ENCODE measurements at regions of chr10 and their contacts with region 1.

Region 1: DNA sequence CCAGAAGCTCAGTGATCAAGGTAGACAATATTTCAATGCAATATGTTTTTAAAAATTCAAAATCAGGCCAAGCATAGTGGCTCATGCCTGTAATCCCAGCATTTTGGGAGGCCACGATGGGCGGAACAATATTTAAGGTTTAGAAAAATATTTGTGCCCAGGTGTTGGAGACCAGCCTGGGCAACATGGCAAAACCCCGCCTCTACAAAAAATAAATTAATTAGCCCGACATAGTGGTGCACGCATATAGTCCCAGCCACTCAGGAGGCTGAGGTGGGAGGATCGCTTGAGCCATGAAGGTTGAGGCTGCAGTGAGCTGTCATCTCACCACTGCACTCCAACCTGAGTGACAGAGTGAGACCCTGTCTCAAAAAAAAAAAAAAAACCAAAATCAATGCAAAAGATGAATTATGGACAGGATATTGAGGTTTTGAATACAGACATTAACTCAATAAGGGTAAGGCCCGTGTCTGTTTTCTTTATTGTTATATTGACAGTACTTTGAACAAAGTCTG is 913 bp upstream of the IFIT5 start:
- DNase-seq: no peak
- H3K4me3 ChIP-seq: peak overlapping the region in 1 of 4 donors; percentile 96
- H3K27ac ChIP-seq: peak overlapping the region; percentile 93 to 99 (median 95)
- H3K4me1 ChIP-seq: peaks cover 6 to 38% (median 15%) of the 10 kb centered on the region in 4 donors
- H3K27me3 ChIP-seq: no peaks in the 10 kb centered on the region
- CTCF ChIP-seq: no peak
- EP300 ChIP-seq: no peak
- POLR2A ChIP-seq: no peak

Region 2: DNA sequence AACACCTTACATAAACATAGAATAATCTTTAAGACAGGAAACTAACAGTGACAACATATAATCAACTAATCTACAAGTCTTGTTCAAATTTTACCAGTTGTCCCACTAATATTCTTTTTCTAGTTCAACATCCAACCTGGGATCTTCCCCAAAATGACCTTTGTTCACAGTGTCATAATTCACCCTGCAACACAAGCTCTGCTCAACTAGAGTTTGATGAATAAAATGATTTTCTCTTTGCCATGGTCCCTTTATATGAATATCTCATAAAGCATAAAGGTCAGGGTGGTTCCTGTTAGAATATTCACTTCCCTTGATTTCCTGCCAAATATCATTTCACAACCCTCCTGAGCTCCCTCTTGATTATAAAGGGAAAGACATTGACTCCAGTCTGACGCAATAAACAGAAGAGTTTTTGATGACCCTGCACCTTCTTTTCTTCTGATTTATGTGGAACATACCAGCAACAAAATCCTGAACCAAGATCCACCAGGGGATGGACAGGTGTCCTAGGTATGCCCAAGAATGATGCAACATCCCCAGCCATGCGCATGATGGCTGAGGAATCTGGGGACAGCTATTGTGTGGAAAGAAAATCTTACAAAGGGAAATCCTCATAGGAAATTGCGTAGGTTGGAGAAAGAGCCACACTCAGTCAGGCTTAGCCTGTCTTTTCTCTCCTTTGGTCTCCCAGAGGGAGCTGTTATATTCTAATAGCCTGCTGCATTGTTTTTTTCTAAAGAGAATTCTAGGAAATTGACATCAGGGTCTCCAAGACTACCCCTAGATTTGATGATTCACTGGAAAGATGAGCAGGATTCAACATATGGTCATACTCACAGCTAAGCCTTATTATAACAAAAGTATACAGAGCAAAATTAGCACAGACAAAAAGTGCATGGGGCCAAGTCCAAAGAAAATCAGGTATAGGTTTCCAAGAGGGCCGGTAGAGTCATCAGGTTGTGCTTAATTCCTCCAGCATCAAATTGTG is 66.9 kb before region 1 on chr10:
- in situ Hi-C with region 1: no loop called
- intact Hi-C with region 1: loop called (anchors 2 kb)
- DNase-seq: no peak
- H3K4me3 ChIP-seq: no peak overlapping the region
- H3K27ac ChIP-seq: peak overlapping the region in 3 of 4 donors; percentile 3 to 19 (median 6)
- H3K4me1 ChIP-seq: peaks cover 7 to 32% (median 18%) of the 10 kb centered on the region in 4 donors
- H3K27me3 ChIP-seq: no peaks in the 10 kb centered on the region
- CTCF ChIP-seq: no peak
- EP300 ChIP-seq: no peak
- POLR2A ChIP-seq: no peak